Activated CD4-positive, alpha-beta T cell treated with anti-CD3 and anti-CD28 coated beads, Interleukin-2, amount 10 ng/mL, durations not matched to agents 24 days and 14 days (primary cell): ENCODE measurements at regions of chr4 and their contacts with region 1.

Region 1: GRCh38 chr4:103318327-103318726 is 120.2 kb upstream of the CENPE start:
- DNase-seq: no peak
- H3K4me3 Mint-ChIP-seq: no peak overlapping the region
- H3K27ac Mint-ChIP-seq: no peak overlapping the region
- H3K4me1 Mint-ChIP-seq: no peaks in the 10 kb centered on the region
- H3K27me3 Mint-ChIP-seq: no peaks in the 10 kb centered on the region

Region 2: GRCh38 chr4:102055805-102056204 is 1262.5 kb before region 1 on chr4:
- intact Hi-C with region 1: no loop called
- DNase-seq: no peak
- H3K4me3 Mint-ChIP-seq: no peak overlapping the region
- H3K27ac Mint-ChIP-seq: no peak overlapping the region
- H3K4me1 Mint-ChIP-seq: no peaks in the 10 kb centered on the region
- H3K27me3 Mint-ChIP-seq: peaks cover 8% of the 10 kb centered on the region

Region 3: DNA sequence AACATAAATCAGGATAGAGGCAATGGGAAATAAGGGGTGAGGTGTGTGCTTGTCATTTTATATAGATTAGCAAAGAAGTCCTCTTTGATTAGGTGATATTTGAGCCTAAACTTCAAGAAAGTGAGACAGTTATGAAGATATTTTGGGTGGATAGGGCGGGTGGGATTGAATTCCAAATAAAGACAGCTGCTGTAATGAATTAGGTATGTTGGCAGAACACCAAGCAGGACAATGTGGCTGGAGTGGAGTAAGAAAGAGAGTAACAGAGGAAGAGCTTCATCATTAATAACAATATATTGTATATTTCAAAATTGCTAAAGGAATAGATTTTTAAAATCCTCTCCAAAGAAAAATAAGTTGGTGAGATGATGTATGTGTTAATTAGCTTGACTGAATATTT is 29.1 kb before region 1 on chr4:
- intact Hi-C with region 1: loop called (anchors 2 kb)
- DNase-seq: no peak
- H3K4me3 Mint-ChIP-seq: no peak overlapping the region
- H3K27ac Mint-ChIP-seq: no peak overlapping the region
- H3K4me1 Mint-ChIP-seq: no peaks in the 10 kb centered on the region
- H3K27me3 Mint-ChIP-seq: no peaks in the 10 kb centered on the region